CD8-positive, alpha-beta T cell (primary cell): ENCODE measurements at regions of chr1 and their contacts with region 1.

Region 1: DNA sequence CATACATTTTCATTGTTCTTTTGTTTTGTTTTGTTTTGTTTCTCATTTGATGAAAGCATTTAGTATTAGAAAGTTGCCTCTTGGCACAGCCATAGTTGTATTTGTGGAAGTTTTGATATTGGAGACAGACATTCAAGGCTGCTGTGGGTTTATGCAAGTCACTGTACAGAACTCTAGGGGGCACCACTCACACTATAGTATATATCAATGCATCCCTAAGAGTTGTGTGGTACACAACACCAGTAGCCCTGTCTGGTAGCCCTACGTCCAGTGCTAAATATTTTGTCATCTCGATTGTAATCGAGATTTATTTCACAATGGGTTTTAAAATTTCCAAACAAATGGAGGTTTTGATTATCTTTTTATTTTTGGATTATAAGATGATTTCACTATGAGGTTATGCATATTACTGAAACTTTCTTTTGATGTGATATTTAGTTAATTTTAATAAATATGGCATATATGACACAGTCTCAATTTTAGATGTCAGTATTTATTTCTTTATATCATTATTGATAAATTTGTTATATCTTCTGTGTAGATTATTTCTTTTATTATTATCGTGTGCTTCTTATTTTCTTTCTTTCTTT is 112.2 kb downstream of the NR5A2 start:
- DNase-seq: peak in 3 of 9 experiments; percentile 15 to 70 (median 67)
- ATAC-seq: peak; percentile 74
- H3K4me3 ChIP-seq: no peak overlapping the region
- H3K4me3 Mint-ChIP-seq: no peak overlapping the region
- H3K27ac ChIP-seq: no peak overlapping the region
- H3K27ac Mint-ChIP-seq: no peak overlapping the region
- H3K4me1 ChIP-seq: no peaks in the 10 kb centered on the region
- H3K4me1 Mint-ChIP-seq: no peaks in the 10 kb centered on the region
- H3K27me3 ChIP-seq: no peaks in the 10 kb centered on the region
- H3K27me3 Mint-ChIP-seq: no peaks in the 10 kb centered on the region
- CTCF ChIP-seq: peak; percentile 71

Region 2: GRCh38 chr1:200053646-200054045 is 86.1 kb before region 1 on chr1:
- CTCF ChIA-PET with region 1: no interaction called
- POLR2A ChIA-PET with region 1: no interaction called
- intact Hi-C with region 1: no loop called
- DNase-seq: no peak
- ATAC-seq: no peak
- H3K4me3 ChIP-seq: no peak overlapping the region
- H3K4me3 Mint-ChIP-seq: no peak overlapping the region
- H3K27ac ChIP-seq: no peak overlapping the region
- H3K27ac Mint-ChIP-seq: no peak overlapping the region
- H3K4me1 ChIP-seq: no peaks in the 10 kb centered on the region
- H3K4me1 Mint-ChIP-seq: no peaks in the 10 kb centered on the region
- H3K27me3 ChIP-seq: no peaks in the 10 kb centered on the region
- H3K27me3 Mint-ChIP-seq: peaks cover 12% of the 10 kb centered on the region
- CTCF ChIP-seq: no peak

Region 3: DNA sequence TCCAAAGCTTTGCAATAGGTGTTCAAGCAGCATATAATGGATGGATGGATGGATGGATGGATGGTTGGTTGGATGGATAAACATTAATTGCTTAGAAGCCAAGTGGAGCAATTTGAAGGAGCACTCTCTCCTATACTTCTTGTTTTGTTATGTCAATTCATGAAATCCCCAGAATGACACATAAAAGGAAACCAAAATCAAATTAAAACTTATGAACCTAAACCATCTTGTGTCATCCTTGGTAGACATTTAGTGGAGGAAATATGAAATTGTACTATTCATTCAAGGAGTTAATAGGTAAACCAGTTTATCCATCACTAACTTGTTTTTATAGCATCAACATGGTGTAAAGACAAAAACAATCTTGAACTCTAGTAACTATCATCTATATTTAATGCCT is 10.2 kb after region 1 on chr1:
- CTCF ChIA-PET with region 1: interaction called, 10 read pairs
- POLR2A ChIA-PET with region 1: interaction called, 3 read pairs
- intact Hi-C with region 1: no loop called
- DNase-seq: no peak
- ATAC-seq: no peak
- H3K4me3 ChIP-seq: no peak overlapping the region
- H3K4me3 Mint-ChIP-seq: no peak overlapping the region
- H3K27ac ChIP-seq: no peak overlapping the region
- H3K27ac Mint-ChIP-seq: no peak overlapping the region
- H3K4me1 ChIP-seq: peaks cover 25% of the 10 kb centered on the region
- H3K4me1 Mint-ChIP-seq: peaks cover 26% of the 10 kb centered on the region
- H3K27me3 ChIP-seq: no peaks in the 10 kb centered on the region
- H3K27me3 Mint-ChIP-seq: no peaks in the 10 kb centered on the region
- CTCF ChIP-seq: no peak

Region 4: DNA sequence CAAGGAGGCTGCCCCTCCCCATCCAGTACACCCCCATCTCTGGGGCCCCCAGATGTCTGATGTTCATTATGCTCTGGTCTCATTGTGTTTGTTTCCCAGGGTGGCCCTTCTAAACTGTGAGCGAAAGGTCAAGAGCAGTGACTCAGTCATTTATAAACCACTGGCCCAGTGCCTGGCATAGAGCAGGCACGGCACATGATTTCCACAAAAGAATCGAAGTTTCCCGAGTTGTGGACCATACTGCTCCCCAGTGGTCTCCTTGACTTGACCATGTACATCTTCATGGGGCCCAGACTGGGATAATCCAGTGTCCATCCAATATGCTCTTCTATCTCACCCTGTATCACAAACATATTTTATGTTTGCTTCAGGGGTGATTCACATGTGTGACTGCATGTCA is 41.1 kb after region 1 on chr1:
- CTCF ChIA-PET with region 1: no interaction called
- POLR2A ChIA-PET with region 1: no interaction called
- intact Hi-C with region 1: no loop called
- DNase-seq: peak in 1 of 9 experiments; percentile 8
- ATAC-seq: no peak
- H3K4me3 ChIP-seq: no peak overlapping the region
- H3K4me3 Mint-ChIP-seq: no peak overlapping the region
- H3K27ac ChIP-seq: no peak overlapping the region
- H3K27ac Mint-ChIP-seq: no peak overlapping the region
- H3K4me1 ChIP-seq: no peaks in the 10 kb centered on the region
- H3K4me1 Mint-ChIP-seq: peaks cover 3% of the 10 kb centered on the region
- H3K27me3 ChIP-seq: no peaks in the 10 kb centered on the region
- H3K27me3 Mint-ChIP-seq: peaks cover 19% of the 10 kb centered on the region
- CTCF ChIP-seq: no peak